ENCODE measurements at regions of chr15 and their contacts with region 1.

Region 1: GRCh38 chr15:72312605-72313447 is 7.1 kb downstream of the CELF6 start:
- DNase-seq: peak; percentile 74
- H3K4me3 Mint-ChIP-seq: no peak overlapping the region
- H3K27ac Mint-ChIP-seq: no peak overlapping the region
- H3K4me1 Mint-ChIP-seq: no peaks in the 10 kb centered on the region
- H3K27me3 Mint-ChIP-seq: peaks cover 28% of the 10 kb centered on the region

Region 2: DNA sequence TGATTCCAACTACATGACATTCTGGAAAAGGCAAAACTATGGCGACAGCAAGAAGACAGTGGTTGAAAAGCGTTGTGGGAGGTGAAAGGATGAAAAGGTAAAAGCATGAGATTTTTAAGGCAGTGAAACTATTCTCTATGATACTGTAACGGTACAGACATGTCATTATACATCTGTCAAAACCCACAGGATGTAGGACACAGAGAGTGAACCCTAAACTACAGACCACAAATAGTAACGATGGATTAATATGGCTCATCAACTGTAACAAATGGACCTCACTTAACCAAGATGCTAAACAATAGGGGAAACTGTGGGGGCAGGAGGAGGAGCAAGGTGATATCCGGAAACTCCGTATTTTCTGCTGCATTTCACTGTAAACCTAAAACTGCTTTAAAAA is 233.9 kb before region 1 on chr15:
- CTCF ChIA-PET with region 1: no interaction called
- DNase-seq: no peak
- H3K4me3 Mint-ChIP-seq: no peak overlapping the region
- H3K27ac Mint-ChIP-seq: peak overlapping the region; percentile 4
- H3K4me1 Mint-ChIP-seq: peaks cover 3% of the 10 kb centered on the region
- H3K27me3 Mint-ChIP-seq: no peaks in the 10 kb centered on the region

Region 3: GRCh38 chr15:72168111-72168808 is 144.6 kb before region 1 on chr15:
- CTCF ChIA-PET with region 1: no interaction called
- DNase-seq: no peak
- H3K4me3 Mint-ChIP-seq: no peak overlapping the region
- H3K27ac Mint-ChIP-seq: no peak overlapping the region
- H3K4me1 Mint-ChIP-seq: peaks cover 14% of the 10 kb centered on the region
- H3K27me3 Mint-ChIP-seq: peaks cover 33% of the 10 kb centered on the region

Region 4: GRCh38 chr15:72285927-72286516 is 26.8 kb before region 1 on chr15:
- CTCF ChIA-PET with region 1: no interaction called
- DNase-seq: peak; percentile 61
- H3K4me3 Mint-ChIP-seq: no peak overlapping the region
- H3K27ac Mint-ChIP-seq: no peak overlapping the region
- H3K4me1 Mint-ChIP-seq: no peaks in the 10 kb centered on the region
- H3K27me3 Mint-ChIP-seq: peaks cover 2% of the 10 kb centered on the region

Region 5: DNA sequence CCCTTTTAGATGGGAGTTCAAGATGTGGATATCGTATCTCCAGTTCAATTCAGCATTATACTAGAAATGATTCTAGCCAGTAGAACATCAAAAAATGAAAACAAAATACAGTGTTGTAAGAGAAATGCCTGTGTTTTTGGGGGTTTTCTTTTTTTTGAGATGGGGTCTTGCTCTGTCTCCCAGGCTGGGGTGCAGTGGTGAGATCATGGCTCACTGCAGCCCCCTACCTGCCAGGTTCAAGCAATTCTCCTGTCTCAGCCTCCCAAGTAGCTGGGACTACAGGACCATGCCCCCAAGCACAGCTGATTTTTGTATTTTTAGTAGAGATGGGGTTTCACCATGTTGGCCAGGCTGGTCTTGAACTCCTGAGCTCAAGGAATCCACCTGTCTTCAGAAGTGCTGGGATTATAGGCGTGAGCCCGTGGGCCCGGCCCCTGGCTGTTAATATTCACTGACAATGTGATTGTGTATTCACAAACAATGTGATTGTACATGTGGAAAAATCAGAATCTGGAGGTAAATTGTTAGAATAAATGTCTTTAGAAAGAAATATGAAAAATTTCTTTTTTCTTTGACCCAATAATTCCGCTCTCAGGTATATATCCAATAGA is 220.3 kb after region 1 on chr15:
- CTCF ChIA-PET with region 1: interaction called, 15 read pairs
- DNase-seq: peak; percentile 40
- H3K4me3 Mint-ChIP-seq: no peak overlapping the region
- H3K27ac Mint-ChIP-seq: no peak overlapping the region
- H3K4me1 Mint-ChIP-seq: peaks cover 22% of the 10 kb centered on the region
- H3K27me3 Mint-ChIP-seq: no peaks in the 10 kb centered on the region

Measured in activated naive CD4-positive, alpha-beta T cell treated with anti-CD3 and anti-CD28 coated beads, Interleukin-2, amount 10 ng/mL, durations not matched to agents 7 days and 5 days (primary cell).